CD8-positive, alpha-beta T cell (primary cell): ENCODE measurements at regions of chr1 and their contacts with region 1.

Region 1: GRCh38 chr1:26921540-26922430 is at the start of gene NUDC:
- DNase-seq: peak; percentile 91 to 98 (median 94)
- ATAC-seq: peak; percentile 92
- H3K4me3 ChIP-seq: peak within 1 kb of the TSS; percentile 84 to 95
- H3K4me3 Mint-ChIP-seq: peak within 1 kb of the TSS; percentile 95
- H3K27ac ChIP-seq: peak within 1 kb of the TSS; percentile 87 to 90
- H3K27ac Mint-ChIP-seq: peak within 1 kb of the TSS; percentile 99
- H3K4me1 ChIP-seq: peaks cover 23% of the 10 kb centered on the region
- H3K4me1 Mint-ChIP-seq: peaks cover 34% of the 10 kb centered on the region
- H3K27me3 ChIP-seq: no peaks in the 10 kb centered on the region
- H3K27me3 Mint-ChIP-seq: no peaks in the 10 kb centered on the region
- CTCF ChIP-seq: no peak
- total RNA-seq, gene NUDC: 51.9 to 55.0 TPM

Region 2: DNA sequence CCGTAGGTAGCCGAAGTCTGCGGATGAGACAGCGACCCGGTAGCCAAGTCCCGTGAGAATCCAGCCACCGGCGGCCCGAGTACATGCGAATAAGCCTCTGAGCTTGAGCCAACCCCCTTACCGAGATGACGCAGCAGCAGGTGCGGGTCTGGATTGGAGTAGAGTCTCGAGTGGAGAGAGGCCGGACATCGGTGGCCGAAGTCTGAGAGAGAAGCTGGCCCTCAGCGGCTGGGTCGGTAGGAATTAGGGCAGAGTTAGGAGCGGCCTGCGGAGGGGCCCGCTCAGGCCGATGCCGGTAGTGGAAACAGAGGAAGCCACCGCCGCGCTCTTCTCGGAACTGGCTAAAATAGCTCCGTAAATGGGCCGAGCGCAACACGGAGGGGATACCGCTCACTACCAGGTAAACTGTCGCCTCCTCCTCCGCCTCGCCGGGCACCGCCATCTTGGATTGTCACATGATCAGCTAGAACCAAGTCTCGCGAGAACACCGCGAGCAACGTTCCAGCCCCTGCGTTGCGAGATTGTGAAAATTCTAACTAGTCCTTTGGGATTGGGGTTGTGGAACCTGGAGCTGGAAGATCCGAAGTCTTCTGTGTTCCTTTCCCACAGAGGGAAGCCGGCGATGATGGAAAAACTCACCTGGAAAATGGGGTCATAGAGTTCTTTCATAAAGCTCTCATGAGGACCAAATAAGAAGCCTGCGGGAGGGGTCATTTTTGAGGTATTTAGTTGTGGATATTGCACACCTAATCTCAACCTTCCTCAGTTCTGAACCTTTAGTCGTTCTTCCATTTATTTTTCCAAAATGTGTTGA is 21.6 kb before region 1 on chr1 and contains the start of gene GPATCH3:
- CTCF ChIA-PET with region 1: no interaction called
- POLR2A ChIA-PET with region 1: interaction called, 11 read pairs
- intact Hi-C with region 1: loop called (anchors 1 kb)
- DNase-seq: peak; percentile 78 to 94 (median 88)
- ATAC-seq: peak; percentile 91
- H3K4me3 ChIP-seq: peak within 1 kb of the TSS; percentile 65 to 75
- H3K4me3 Mint-ChIP-seq: peak within 1 kb of the TSS; percentile 89
- H3K27ac ChIP-seq: peak within 1 kb of the TSS; percentile 70 to 85
- H3K27ac Mint-ChIP-seq: peak within 1 kb of the TSS; percentile 95
- H3K4me1 ChIP-seq: peaks cover 18% of the 10 kb centered on the region
- H3K4me1 Mint-ChIP-seq: peaks cover 27% of the 10 kb centered on the region
- H3K27me3 ChIP-seq: peaks cover 0 to 2% of the 10 kb centered on the region in 2 experiments
- H3K27me3 Mint-ChIP-seq: no peaks in the 10 kb centered on the region
- CTCF ChIP-seq: no peak
- total RNA-seq, gene GPATCH3: 47.8 to 47.9 TPM